PC-3 (cell line): ENCODE measurements at regions of chr5 and their contacts with region 1.

Region 1: DNA sequence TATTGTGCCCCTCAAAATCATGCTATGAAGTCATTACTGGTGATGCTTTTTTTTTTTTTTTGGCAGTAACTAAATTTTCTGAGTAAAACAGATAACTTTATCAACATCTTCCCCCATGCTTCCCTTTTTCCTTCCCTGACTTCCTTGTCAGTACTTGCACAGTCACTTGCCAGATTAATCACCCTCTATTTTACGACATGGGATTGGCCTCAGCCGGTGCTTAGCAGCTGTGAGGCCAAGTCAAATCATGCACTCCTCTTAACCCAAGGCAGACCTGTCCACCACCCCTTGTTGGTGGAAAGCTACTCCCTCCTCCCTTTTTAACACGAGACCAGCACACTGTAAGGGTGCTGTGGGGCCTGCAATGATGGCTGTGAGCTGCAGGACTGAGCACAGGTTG is 118.0 kb upstream of the OTULINL start:
- DNase-seq: peak; percentile 89
- ATAC-seq: peak; percentile 93
- H3K4me3 ChIP-seq: no peak overlapping the region
- H3K27ac ChIP-seq: peak overlapping the region; percentile 90
- H3K4me1 ChIP-seq: peaks cover 39% of the 10 kb centered on the region
- H3K27me3 ChIP-seq: no peaks in the 10 kb centered on the region
- CTCF ChIP-seq: no peak

Region 2: DNA sequence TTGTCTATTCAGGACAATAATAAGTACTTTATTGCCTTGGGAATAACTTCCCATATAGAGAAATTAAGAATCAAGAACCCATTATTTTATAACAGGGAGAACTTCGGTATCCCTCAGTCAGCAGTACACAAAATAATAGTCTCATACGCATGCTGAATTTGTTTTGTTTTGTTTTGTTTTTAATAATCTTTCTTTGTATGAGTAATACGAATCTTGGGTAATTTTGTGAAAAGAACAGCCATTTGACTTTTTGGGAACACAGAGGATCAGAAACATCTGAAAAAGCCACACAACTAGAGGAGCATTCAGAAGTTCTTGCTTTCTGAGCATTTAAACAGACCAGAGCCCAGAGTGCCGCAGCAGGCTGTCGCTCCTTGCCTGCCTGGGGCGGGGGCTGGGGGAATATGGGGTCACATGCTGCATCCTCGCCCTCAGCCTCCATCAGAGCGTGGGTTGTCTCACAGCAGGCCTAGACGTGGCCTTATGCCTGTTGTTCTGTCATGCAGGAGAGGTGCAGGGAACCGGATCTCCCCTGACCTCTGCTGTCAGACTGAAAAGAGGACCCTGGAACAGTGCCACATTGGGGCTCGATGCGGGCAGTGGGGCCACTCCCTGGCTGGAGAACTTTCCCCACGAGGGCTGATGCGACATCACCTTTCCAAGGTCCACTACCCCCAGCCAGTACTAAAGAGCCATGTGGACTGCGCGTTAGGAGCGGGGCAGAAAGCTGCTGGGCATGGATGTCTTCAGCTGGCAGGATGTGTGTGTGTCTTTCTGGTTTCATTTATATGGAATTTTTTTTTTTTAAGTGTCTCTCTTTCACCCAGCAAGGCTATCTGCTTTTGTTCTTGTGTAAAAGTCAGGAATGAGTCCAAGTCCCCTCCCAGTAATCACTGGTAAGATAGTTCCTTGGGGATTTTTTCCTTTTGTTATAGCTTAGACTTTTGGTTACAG is 15.4 kb before region 1 on chr5:
- CTCF ChIA-PET with region 1: no interaction called
- POLR2A ChIA-PET with region 1: no interaction called
- intact Hi-C with region 1: loop called (anchors 1 kb)
- DNase-seq: no peak
- ATAC-seq: no peak
- H3K4me3 ChIP-seq: no peak overlapping the region
- H3K27ac ChIP-seq: peak overlapping the region; percentile 63
- H3K4me1 ChIP-seq: peaks cover 45% of the 10 kb centered on the region
- H3K27me3 ChIP-seq: no peaks in the 10 kb centered on the region
- CTCF ChIP-seq: no peak